ENCODE measurements at regions of chr11 and their contacts with region 1.

Region 1: DNA sequence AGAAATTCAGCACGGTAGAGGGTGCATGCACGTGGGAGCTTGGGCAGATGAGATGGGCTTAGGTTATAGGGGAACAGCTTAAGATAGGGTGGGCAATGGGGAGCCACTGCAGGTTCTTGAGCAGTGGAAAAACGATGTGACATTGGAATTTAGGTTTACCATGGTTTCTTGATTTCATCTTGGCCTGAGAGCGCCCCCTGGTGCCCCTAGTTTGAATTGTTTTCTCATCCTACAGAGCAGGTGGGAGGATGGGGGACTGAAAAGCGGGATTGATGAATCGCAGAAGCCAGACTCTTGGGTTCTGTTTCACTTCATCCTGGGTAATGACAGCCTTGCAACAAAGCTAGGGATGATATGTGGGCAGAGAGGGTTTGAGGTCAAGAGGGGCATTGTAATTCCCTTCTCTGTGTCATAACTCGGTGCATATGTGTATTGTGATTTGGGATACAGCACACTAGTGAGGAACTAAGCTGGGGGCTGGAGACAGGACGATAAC is 6.7 kb upstream of the MCAM start:
- DNase-seq: peak in 1 of 2 donors; percentile 94
- H3K4me3 ChIP-seq: no peak overlapping the region
- CTCF ChIP-seq: peak in 1 of 3 donors; percentile 46
- POLR2A ChIP-seq: no peak

Region 2: GRCh38 chr11:118961591-118961990 is 362.0 kb before region 1 on chr11:
- intact Hi-C with region 1: loop called (anchors 5 kb)
- DNase-seq: no peak
- H3K4me3 ChIP-seq: no peak overlapping the region
- CTCF ChIP-seq: no peak
- POLR2A ChIP-seq: no peak

Region 3: DNA sequence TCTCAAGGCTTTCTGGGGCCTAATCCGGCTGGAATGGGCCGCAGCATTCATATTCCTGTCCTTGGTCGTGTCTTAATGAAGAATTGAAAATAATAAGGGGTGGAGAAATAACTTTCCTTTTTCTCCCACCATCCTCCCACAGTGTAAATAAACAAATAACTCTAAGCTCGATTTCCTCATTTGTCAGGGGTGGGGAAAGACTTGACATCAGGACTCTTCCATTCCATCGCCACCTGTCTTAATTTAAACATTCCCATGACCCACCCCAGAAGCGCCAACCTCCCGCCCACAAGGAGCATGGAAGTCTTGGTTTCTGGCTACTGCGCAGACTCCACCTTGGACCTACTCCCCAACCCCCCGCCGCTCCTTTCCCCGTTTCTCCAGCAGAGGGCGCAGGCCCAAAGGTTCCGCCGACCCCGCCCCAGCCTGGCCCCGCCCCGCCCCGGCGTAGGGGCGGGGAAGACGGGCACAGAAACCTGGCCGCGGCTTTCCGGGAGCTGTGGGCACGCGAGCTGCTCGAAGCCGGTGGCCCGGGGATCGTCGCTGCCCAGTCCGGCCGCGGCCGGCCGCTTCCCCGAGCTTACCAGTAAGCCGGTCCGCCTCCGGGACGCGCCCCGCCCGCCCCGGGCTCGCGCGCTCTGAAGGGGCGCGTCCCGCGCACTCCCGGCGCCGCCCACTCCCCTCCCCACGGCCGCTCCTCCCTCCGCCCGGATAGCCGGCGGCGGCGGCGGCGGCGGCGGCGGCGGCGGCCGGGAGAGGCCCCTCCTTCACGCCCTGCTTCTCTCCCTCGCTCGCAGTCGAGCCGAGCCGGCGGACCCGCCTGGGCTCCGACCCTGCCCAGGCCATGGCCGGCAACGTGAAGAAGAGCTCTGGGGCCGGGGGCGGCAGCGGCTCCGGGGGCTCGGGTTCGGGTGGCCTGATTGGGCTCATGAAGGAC is 117.7 kb before region 1 on chr11 and contains the start of gene CBL:
- intact Hi-C with region 1: loop called (anchors 10 kb)
- DNase-seq: peak; percentile 94 to 99
- H3K4me3 ChIP-seq: peak within 1 kb of the TSS; percentile 99
- CTCF ChIP-seq: no peak
- POLR2A ChIP-seq: no peak
- total RNA-seq, gene CBL: 11.7 to 14.6 (median 14.0) TPM

Region 4: DNA sequence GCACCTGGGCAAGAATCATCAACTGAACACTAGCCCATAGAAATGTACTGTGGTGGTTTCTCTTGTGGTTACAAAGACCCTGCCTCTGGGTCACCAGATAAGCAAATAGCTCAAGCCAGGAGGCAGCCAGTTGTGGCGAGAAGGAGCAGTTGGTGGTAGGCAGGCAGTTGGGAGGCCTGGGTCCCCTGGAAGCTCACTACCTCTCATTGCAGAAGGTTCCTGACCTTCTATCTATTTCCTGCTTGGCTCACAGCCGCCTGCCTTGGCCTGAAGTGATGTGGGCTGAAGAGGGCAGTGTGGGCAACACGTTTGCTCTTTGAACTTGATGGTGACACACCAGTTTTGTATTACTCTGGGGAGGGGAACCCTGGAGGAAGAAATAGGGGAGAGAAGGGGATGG is 370.7 kb after region 1 on chr11:
- intact Hi-C with region 1: no loop called
- DNase-seq: no peak
- H3K4me3 ChIP-seq: no peak overlapping the region
- CTCF ChIP-seq: no peak
- POLR2A ChIP-seq: no peak